CD4-positive, alpha-beta memory T cell (primary cell): ENCODE measurements at regions of chr20 and their contacts with region 1.

Region 1: GRCh38 chr20:5100684-5101347 is 18.9 kb downstream of the PCNA start:
- DNase-seq: peak; percentile 63 to 69 (median 68)
- H3K4me3 ChIP-seq: no peak overlapping the region
- H3K4me3 Mint-ChIP-seq: no peak overlapping the region
- H3K27ac ChIP-seq: no peak overlapping the region
- H3K27ac Mint-ChIP-seq: peak overlapping the region; percentile 45 to 89 (median 76)
- H3K4me1 ChIP-seq: no peaks in the 10 kb centered on the region
- H3K4me1 Mint-ChIP-seq: peaks cover 7 to 18% (median 15%) of the 10 kb centered on the region in 4 donors
- H3K27me3 ChIP-seq: no peaks in the 10 kb centered on the region
- H3K27me3 Mint-ChIP-seq: no peaks in the 10 kb centered on the region

Region 2: DNA sequence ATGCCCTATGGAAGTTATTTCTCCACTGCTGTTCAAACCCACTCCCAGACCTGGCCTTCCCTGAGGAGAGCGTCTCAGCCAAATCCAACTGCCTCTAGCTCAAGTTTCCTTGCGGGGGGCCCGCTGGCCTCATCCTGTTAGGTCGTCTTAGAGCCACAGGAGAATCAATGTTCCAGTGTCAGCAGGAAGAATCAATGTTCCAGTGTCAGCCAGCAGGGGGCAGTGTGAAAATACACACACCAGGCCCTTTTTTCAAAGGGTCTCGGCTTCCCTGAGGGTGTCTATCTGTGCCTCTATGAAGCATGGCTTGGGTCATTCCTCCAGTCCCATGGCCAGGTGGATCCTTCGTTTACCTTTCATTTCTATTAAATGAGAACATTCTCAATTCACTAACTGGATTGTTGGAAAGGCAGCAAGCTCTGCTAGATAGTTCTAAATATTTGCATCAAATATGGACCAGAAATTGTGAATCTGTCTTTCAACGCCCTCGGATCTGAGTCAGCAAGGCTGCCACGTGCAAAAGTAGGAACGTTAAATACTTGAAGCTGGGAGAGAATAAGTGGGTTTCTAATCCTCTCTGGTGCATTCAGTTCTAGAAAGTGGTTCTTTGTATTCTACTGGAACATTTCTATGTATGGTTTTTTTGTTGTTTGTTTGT is 359.9 kb before region 1 on chr20:
- CTCF ChIA-PET with region 1: interaction called, 5 read pairs
- POLR2A ChIA-PET with region 1: no interaction called
- intact Hi-C with region 1: loop called (anchors 1 kb)
- DNase-seq: peak; percentile 43 to 58 (median 52)
- H3K4me3 ChIP-seq: no peak overlapping the region
- H3K4me3 Mint-ChIP-seq: no peak overlapping the region
- H3K27ac ChIP-seq: no peak overlapping the region
- H3K27ac Mint-ChIP-seq: peak overlapping the region in 1 of 7 donors; percentile 9
- H3K4me1 ChIP-seq: no peaks in the 10 kb centered on the region
- H3K4me1 Mint-ChIP-seq: peaks cover 0 to 8% (median under 1%) of the 10 kb centered on the region in 4 donors
- H3K27me3 ChIP-seq: peaks cover under 1% of the 10 kb centered on the region
- H3K27me3 Mint-ChIP-seq: peaks cover 3 to 13% of the 10 kb centered on the region in 2 donors

Region 3: DNA sequence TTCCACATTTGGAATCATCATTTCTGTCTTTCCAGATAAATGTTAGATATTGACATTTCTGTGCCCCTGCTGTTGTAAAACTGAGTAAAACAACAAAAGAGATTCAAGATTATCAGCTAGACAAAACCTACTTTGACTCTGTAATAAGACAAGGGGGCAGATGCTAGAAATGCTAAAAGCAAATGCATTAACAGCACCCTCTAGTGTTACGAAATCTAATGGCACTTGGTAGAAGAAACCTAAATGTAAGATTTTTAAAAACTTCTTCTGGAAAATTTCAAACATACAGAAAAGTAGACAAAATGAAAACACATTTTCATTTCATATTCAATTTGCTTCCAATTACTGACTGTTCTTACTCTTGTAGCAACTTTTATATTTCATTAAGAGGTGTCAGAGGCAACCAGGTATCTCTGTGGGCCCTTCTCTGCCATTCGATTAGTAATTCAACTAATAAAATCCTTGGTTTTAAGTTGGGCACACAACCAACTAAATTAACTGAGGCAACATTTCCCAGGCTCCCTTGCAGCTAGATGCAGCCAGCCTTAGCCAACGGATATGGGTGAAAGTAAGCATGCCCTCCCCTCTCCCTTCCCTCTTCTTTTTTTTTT is 144.5 kb before region 1 on chr20:
- CTCF ChIA-PET with region 1: interaction called, 30 read pairs
- POLR2A ChIA-PET with region 1: no interaction called
- intact Hi-C with region 1: loop called (anchors 1 kb)
- DNase-seq: peak in 4 of 5 donors; percentile 47 to 63 (median 56)
- H3K4me3 ChIP-seq: no peak overlapping the region
- H3K4me3 Mint-ChIP-seq: no peak overlapping the region
- H3K27ac ChIP-seq: no peak overlapping the region
- H3K27ac Mint-ChIP-seq: peak overlapping the region in 1 of 7 donors; percentile 19
- H3K4me1 ChIP-seq: peaks cover 3% of the 10 kb centered on the region
- H3K4me1 Mint-ChIP-seq: peaks cover 2 to 11% (median 4%) of the 10 kb centered on the region in 4 donors
- H3K27me3 ChIP-seq: no peaks in the 10 kb centered on the region
- H3K27me3 Mint-ChIP-seq: no peaks in the 10 kb centered on the region

Region 4: DNA sequence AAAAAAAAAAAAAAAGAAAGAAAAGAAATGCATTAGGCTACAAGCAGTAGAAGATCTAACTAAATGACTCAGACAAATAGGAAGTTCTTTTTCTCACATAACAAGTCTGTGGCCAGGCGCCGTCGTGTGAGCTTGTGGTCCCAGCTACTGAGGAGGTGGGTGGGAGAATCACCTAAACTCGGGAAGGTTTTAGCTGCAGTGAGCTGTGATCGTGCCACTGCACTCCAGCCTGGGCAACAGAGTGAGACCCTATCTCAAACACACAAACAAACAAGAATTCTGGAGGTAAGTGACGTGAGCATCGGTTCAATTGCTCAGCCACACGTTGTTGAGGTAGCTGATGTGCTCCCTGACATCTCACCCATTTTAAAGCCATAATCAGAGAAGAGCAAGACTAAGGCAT is 61.6 kb before region 1 on chr20:
- CTCF ChIA-PET with region 1: interaction called, 15 read pairs
- POLR2A ChIA-PET with region 1: no interaction called
- intact Hi-C with region 1: no loop called
- DNase-seq: peak in 2 of 5 donors; percentile 2 to 49
- H3K4me3 ChIP-seq: no peak overlapping the region
- H3K4me3 Mint-ChIP-seq: peak overlapping the region in 5 of 8 donors; percentile 31 to 67 (median 45)
- H3K27ac ChIP-seq: no peak overlapping the region
- H3K27ac Mint-ChIP-seq: peak overlapping the region in 4 of 7 donors; percentile 46 to 91 (median 72)
- H3K4me1 ChIP-seq: peaks cover 4% of the 10 kb centered on the region
- H3K4me1 Mint-ChIP-seq: peaks cover 3 to 7% (median 5%) of the 10 kb centered on the region in 4 donors
- H3K27me3 ChIP-seq: no peaks in the 10 kb centered on the region
- H3K27me3 Mint-ChIP-seq: peaks cover 0 to 3% of the 10 kb centered on the region in 2 donors

Region 5: GRCh38 chr20:5078399-5078958 is 22.3 kb before region 1 on chr20:
- CTCF ChIA-PET with region 1: interaction called, 16 read pairs
- POLR2A ChIA-PET with region 1: interaction called, 3 read pairs
- intact Hi-C with region 1: loop called (anchors 1 kb)
- DNase-seq: peak; percentile 75 to 89 (median 81)
- H3K4me3 ChIP-seq: peak overlapping the region; percentile 44 to 59
- H3K4me3 Mint-ChIP-seq: peak overlapping the region; percentile 78 to 94 (median 84)
- H3K27ac ChIP-seq: peak overlapping the region; percentile 89
- H3K27ac Mint-ChIP-seq: peak overlapping the region; percentile 91 to 100 (median 98)
- H3K4me1 ChIP-seq: peaks cover 27% of the 10 kb centered on the region
- H3K4me1 Mint-ChIP-seq: peaks cover 15 to 31% (median 22%) of the 10 kb centered on the region in 4 donors
- H3K27me3 ChIP-seq: no peaks in the 10 kb centered on the region
- H3K27me3 Mint-ChIP-seq: no peaks in the 10 kb centered on the region

Region 6: GRCh38 chr20:5119435-5120188 is 18.8 kb after region 1 on chr20 and contains the start of gene PCNA:
- CTCF ChIA-PET with region 1: interaction called, 11 read pairs
- POLR2A ChIA-PET with region 1: interaction called, 5 read pairs
- intact Hi-C with region 1: no loop called
- DNase-seq: peak; percentile 92 to 96 (median 94)
- H3K4me3 ChIP-seq: peak within 1 kb of the TSS; percentile 83 to 89
- H3K4me3 Mint-ChIP-seq: peak within 1 kb of the TSS; percentile 92 to 97 (median 95)
- H3K27ac ChIP-seq: peak within 1 kb of the TSS; percentile 72
- H3K27ac Mint-ChIP-seq: peak within 1 kb of the TSS; percentile 93 to 98 (median 96)
- H3K4me1 ChIP-seq: peaks cover 29% of the 10 kb centered on the region
- H3K4me1 Mint-ChIP-seq: peaks cover 13 to 42% (median 29%) of the 10 kb centered on the region in 4 donors
- H3K27me3 ChIP-seq: no peaks in the 10 kb centered on the region
- H3K27me3 Mint-ChIP-seq: no peaks in the 10 kb centered on the region
- total RNA-seq, gene PCNA: 60.0 to 60.5 TPM

Region 7: DNA sequence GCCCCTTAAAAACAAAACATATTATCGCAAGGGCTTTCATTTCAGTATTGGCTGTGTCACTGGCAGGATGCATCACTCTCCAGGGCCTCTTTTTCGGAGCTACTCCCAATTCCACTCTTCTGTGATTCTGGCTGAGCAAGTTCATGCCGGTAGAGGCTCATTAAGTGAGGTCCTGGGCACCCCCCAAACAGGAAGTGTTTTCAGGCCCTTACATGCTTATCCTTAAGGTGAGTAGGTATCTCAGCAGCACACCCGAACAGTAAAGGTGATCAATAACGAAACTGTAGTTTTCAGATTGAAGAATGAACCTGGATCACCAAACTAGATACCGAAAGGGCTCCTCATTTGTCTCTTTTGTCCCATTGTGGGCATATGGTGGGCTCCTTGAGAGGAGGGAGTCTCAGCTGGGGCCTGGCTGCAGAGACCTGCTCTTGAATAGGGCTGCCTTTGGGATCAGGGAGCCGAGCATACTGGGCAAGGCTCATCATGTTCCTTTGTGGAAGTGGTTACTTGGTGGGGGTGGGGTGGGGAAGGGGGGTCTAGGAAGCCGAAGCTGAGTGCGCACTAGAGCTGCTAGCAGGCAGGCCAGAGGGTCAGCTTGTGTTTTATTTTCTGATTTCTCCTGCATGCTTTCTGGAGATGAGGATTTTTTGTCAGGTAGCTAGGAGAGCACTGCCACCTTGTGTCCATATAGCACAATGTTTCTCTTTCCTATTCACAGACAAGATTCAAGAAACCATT is 91.2 kb after region 1 on chr20:
- CTCF ChIA-PET with region 1: interaction called, 36 read pairs
- POLR2A ChIA-PET with region 1: no interaction called
- intact Hi-C with region 1: no loop called
- DNase-seq: peak in 4 of 5 donors; percentile 55 to 62 (median 58)
- H3K4me3 ChIP-seq: no peak overlapping the region
- H3K4me3 Mint-ChIP-seq: no peak overlapping the region
- H3K27ac ChIP-seq: no peak overlapping the region
- H3K27ac Mint-ChIP-seq: peak overlapping the region; percentile 48 to 92 (median 86)
- H3K4me1 ChIP-seq: peaks cover 7% of the 10 kb centered on the region
- H3K4me1 Mint-ChIP-seq: peaks cover 2 to 8% (median 6%) of the 10 kb centered on the region in 4 donors
- H3K27me3 ChIP-seq: no peaks in the 10 kb centered on the region
- H3K27me3 Mint-ChIP-seq: no peaks in the 10 kb centered on the region

Region 8: DNA sequence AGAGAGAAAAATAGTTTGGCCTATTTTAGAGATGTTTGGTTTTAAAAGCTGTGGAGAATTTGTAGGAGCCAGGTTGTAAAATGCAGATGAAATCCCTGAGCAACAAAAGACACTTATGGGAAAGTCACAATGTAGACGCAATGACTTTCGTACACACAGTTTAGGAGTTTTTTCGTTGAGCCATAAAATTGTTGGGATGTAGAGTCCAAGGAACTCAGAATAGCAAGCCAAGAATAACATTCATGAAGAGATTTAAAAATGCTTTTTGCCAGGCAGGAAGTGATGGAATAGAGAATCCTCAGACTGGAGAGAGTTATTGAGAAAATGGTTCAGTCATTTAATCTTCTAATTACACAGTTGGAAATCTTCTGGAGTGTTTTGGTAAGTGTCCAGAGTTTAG is 227.5 kb after region 1 on chr20:
- CTCF ChIA-PET with region 1: no interaction called
- POLR2A ChIA-PET with region 1: no interaction called
- intact Hi-C with region 1: no loop called
- DNase-seq: no peak
- H3K4me3 ChIP-seq: no peak overlapping the region
- H3K4me3 Mint-ChIP-seq: no peak overlapping the region
- H3K27ac ChIP-seq: no peak overlapping the region
- H3K27ac Mint-ChIP-seq: no peak overlapping the region
- H3K4me1 ChIP-seq: no peaks in the 10 kb centered on the region
- H3K4me1 Mint-ChIP-seq: no peaks in the 10 kb centered on the region
- H3K27me3 ChIP-seq: no peaks in the 10 kb centered on the region
- H3K27me3 Mint-ChIP-seq: peaks cover 19 to 37% of the 10 kb centered on the region in 2 donors